SK-N-SH (cell line): ENCODE measurements at regions of chr1 and their contacts with region 1.

Region 1: DNA sequence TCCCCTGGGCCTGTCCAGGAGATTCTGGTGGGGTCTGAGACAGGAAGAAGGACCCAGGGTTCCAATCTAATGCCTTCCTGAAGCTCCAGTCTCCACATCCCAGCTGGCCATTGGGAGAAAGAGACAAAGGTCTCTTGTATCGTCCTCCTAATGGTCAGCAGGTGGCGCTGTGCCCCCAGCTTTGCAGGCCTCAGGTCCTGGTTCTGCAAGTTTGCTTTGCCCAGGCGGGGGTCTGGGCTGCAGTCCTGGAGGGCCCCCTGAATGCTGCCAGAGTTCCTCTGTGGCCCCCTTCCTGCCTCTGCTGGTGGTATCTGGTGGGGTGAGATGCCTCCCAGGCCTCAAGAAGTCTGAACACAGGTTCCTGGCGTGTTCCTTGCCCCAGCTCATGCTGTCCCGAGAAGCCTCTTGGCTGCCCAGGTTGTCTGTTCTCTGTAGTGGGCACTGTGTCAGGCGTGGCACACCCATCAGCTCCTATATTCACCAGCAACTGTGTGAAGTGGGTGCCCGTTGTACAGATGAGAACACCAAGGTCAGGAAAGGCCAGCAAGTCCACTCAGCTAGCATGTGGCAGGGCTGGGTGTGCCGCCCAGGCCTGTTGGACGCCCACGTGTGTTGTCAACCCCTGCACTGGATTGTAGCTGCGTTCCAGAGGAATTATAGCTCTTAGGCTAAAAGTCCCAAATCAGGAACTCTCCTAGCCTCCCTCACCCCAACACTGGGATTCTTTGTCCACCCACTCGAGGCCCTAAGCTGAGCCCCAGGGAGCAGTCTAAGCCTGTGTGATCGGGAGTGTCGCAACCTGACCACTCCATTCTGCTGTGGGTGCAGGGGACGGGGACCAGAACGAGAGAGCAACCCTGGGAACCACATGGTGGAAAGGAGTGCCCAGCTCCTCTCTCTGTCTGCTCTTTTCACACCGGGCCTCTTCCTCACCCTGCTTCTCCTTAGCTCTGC is 33.9 kb upstream of the CSF3R start:
- DNase-seq: peak; percentile 87
- H3K4me3 ChIP-seq: peak overlapping the region in 1 of 2 experiments; percentile 43; a peak in 1 of 4 replicates
- H3K27ac ChIP-seq: no peak overlapping the region
- H3K4me1 ChIP-seq: peaks cover 0 to 3% of the 10 kb centered on the region in 2 experiments; a peak in 1 of 4 replicates
- H3K27me3 ChIP-seq: no peaks in the 10 kb centered on the region
- CTCF ChIP-seq: peak; percentile 83
- EP300 ChIP-seq: no peak
- RAD21 ChIP-seq: peak; percentile 93

Region 2: DNA sequence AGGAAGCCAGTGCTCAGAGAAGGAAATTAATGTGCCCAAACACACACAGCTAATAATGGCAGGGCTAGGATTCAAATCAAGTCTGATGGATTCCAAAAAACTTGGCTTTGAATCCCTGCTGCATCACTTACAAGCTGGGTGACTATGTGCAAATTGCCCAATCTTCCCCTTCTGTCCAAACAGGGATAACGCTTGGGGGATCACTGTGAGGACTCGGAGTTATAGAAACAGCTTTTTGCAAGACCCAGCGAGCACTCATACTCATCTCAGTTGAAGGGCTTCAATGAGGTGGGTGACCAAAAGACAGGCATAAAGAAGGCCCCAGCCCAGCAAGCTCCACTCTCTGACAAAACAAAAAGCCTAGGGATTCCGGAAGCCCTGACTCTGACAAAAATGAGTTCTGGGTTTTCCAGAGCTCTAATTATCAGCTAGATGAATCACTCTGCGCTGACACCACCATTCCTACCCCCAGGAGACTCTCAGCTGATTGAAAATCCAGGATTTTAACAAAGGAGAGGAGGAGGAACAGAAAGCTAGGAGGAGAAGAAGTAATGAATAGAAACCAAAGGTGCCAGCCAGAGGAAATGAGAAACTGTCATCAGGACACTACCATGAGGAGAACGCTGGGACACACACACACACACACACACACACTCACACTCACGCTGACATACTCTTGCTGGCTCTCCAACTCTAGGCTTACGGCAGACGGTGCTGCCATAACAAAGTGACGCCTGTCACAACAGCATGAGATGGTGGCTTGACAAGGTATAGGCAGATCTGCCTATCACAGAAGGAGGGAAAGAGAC is 129.3 kb before region 1 on chr1:
- CTCF ChIA-PET with region 1: no interaction called
- POLR2A ChIA-PET with region 1: no interaction called
- DNase-seq: no peak
- H3K4me3 ChIP-seq: peak overlapping the region; percentile 12 to 52; a peak in 2 of 4 replicates
- H3K27ac ChIP-seq: peak overlapping the region; percentile 97 to 99
- H3K4me1 ChIP-seq: peaks cover 25% of the 10 kb centered on the region in 2 experiments
- H3K27me3 ChIP-seq: no peaks in the 10 kb centered on the region
- CTCF ChIP-seq: no peak
- EP300 ChIP-seq: no peak
- RAD21 ChIP-seq: no peak

Region 3: DNA sequence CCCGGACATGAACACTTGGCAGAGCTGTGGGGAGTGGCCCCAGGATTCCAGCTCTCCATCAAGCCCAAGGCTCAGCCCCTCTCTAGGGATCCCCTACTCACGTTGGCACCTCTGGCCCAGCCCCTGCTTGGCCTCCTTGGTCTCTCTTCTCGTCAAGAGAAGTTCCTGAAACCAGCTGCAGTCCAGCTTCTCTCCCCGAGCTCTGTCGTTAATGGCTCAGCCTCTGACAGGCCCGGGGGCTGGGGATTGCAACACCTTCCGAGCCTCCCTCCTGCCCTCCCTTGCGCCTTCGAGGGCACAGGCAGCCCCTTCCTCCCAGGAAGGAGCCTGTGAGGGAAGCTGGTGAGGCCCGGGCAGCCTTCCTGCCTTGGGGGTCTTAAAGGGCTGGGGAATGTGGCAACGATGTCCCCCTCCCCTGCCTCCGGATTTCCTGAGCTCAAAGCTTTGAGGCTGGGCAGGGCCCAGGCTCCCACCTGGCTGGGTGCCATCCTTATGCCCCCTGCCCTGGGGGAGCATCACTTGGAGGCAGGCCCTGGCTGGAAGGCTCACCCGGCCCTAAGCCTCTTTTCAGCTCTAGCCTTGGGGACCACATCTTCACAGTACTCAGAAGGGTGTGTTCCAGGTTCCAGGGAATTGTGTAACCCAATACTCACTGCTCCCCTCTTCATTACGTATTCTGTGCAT is 33.8 kb before region 1 on chr1 and contains the start of gene CSF3R:
- CTCF ChIA-PET with region 1: interaction called, 21 read pairs
- POLR2A ChIA-PET with region 1: no interaction called
- DNase-seq: no peak
- H3K4me3 ChIP-seq: no peak within 1 kb of the TSS
- H3K27ac ChIP-seq: peak within 1 kb of the TSS in 1 of 2 experiments; percentile 13; a peak in 1 of 4 replicates
- H3K4me1 ChIP-seq: peaks cover 0 to 18% of the 10 kb centered on the region in 2 experiments; a peak in 1 of 4 replicates
- H3K27me3 ChIP-seq: no peaks in the 10 kb centered on the region
- CTCF ChIP-seq: no peak
- EP300 ChIP-seq: no peak
- RAD21 ChIP-seq: no peak
- polyA plus RNA-seq, gene CSF3R: not detected in 2 replicates

Region 4: DNA sequence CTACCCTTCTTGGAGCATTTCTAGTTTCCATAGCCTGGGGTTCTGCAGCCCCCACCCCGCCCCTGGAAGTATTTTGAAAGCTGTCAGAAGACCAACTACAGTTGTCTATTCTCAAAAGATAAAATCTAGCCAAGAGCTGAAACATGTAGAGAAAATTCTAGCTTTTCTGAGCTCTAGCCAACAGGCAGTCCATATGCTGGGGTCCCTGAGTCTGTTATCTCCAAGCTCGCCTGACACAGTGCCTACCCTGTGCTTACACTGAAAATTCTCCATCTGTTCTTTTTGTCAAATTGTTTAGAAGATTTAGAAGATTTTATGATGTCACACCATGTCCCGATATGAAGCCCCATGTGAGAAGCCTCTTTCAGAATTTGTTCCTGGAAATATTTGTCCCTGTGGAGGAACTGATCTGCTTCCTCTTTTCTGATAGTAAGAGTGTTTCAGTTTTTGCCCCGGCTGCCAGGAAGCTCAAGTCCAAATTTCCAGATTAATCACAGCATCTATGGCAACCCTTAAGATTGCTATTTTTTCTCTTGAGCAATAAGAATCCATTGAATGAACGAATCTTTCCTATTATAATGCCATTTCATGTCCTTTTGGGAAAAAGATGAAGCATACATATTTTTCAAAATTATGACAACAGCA is 10.3 kb before region 1 on chr1:
- CTCF ChIA-PET with region 1: interaction called, 49 read pairs
- POLR2A ChIA-PET with region 1: no interaction called
- DNase-seq: no peak
- H3K4me3 ChIP-seq: no peak overlapping the region
- H3K27ac ChIP-seq: no peak overlapping the region
- H3K4me1 ChIP-seq: no peaks in the 10 kb centered on the region
- H3K27me3 ChIP-seq: peaks cover 5% of the 10 kb centered on the region; the same call in 1 of the 2 replicates
- CTCF ChIP-seq: no peak
- EP300 ChIP-seq: no peak
- RAD21 ChIP-seq: no peak

Region 5: DNA sequence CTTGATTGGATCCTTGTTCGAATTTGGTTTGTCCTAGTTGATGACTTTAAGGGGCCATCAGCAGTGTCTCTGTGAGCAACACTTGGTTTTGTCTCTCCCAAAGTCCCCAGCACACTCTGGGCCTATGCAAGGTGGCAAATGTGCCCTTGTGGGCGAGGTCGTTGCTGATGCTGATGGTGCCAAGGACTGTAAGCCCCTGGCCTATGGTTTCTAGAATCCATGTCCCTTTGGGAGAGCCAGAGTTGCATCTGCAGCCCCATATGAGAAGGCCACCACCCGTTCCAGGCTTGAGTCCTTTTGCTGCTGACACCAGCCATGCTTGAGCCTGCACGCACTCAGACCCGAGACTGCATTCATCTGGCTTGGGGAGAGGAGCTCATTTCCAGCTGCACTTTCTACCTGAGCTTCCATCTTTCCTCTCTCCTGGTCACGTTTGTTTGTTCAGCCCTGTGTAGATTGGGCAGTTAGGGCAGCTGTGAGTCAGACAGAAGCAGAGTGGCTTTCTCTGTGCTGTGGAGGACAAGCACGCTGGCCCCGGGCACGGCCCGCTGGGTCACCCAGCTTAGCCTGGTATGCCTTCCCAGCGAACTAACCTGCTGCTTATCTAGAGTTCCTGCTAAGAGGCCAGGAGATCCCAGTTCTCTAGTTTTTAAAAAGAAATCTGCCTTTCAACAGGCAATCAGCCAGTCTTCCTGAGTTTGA is 18.2 kb after region 1 on chr1:
- CTCF ChIA-PET with region 1: interaction called, 39 read pairs
- POLR2A ChIA-PET with region 1: no interaction called
- DNase-seq: no peak
- H3K4me3 ChIP-seq: no peak overlapping the region
- H3K27ac ChIP-seq: no peak overlapping the region
- H3K4me1 ChIP-seq: peaks cover 0 to 6% of the 10 kb centered on the region in 2 experiments; a peak in 1 of 4 replicates
- H3K27me3 ChIP-seq: no peaks in the 10 kb centered on the region
- CTCF ChIP-seq: no peak
- EP300 ChIP-seq: no peak
- RAD21 ChIP-seq: no peak

Region 6: DNA sequence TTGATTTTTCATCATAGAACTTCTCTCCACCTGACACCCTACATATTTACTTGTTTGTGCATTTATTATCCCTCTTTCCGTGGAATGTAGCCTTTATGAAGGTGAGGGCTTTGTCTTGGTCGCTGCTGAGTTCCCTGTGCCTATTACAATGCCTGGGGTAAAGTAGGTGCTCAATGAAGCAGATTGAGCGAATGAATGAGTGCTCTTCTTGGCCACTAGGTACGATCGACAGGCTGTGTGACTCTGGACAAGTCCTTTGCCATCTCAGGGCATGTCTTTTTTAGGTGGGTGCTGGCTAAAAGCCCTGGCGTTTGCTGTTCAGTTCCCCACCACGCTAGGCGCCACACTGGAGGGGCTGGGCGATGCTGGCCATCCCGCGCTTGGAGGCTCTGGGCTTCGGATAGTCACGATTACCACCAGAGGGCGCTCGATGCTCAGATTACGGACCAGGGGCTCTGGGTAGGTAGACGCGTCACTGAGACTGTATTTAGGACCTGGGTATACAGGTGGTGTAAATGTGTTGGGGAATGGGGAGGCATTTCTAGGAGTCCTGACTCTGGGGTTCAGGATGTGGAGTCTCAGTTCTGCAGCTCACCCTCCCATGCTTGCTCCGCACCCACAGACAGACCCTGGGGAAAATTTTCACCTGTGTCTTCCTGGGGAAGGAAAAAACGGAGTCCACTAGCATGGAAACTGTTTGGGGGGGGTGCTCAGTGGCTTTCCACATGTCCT is 37.1 kb after region 1 on chr1:
- CTCF ChIA-PET with region 1: interaction called, 52 read pairs
- POLR2A ChIA-PET with region 1: no interaction called
- DNase-seq: peak; percentile 83
- H3K4me3 ChIP-seq: peak overlapping the region in 1 of 2 experiments; percentile 20; a peak in 1 of 4 replicates
- H3K27ac ChIP-seq: no peak overlapping the region
- H3K4me1 ChIP-seq: no peaks in the 10 kb centered on the region
- H3K27me3 ChIP-seq: no peaks in the 10 kb centered on the region
- CTCF ChIP-seq: peak; percentile 73
- EP300 ChIP-seq: no peak
- RAD21 ChIP-seq: peak; percentile 86

Region 7: GRCh38 chr1:36585569-36586548 is 69.2 kb after region 1 on chr1:
- CTCF ChIA-PET with region 1: interaction called, 10 read pairs
- POLR2A ChIA-PET with region 1: no interaction called
- DNase-seq: no peak
- H3K4me3 ChIP-seq: no peak overlapping the region
- H3K27ac ChIP-seq: no peak overlapping the region
- H3K4me1 ChIP-seq: no peaks in the 10 kb centered on the region
- H3K27me3 ChIP-seq: no peaks in the 10 kb centered on the region
- CTCF ChIP-seq: no peak
- EP300 ChIP-seq: no peak
- RAD21 ChIP-seq: no peak

Region 8: DNA sequence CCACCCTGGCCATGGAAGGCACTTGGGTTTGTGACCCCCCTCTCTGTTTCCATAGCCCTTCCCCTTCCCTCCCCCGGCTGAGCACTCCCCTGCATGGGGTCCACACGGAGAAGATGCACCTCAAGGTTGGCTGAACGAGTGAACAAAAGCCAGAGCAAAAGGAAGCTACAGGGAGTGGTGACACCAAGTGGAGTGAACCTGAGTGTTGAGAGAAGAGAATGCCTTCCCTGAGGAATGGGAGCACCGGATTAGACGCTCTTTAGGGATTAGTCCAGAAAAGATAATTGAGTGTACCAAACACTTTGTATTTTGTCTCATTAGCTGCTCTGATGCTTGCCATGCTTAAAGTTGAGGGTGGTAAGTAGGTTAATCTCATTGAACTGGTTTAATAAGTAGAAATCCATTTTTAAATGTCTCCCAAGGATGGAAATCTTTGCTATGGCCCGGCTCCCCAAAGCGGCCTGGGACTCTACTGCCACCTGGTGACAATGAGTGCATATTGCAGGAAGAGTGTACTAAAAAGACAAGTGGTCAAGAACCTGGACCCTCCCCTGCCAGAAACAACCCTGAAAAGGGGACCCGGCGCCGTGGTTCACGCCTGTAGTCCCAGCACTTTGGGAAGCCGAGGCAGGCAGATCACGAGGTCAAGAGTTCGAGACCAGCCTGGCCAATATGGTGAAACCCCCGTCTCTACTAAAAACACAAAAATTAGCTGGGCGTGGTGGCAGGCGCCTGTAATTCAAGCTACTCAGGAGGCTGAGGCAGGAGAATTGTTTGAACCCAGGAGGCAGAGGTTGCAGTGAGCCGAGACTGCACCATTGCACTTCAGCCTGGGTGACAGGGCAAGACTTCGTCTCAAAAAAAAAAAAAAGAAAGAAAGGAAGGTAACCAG is 807.1 kb after region 1 on chr1:
- CTCF ChIA-PET with region 1: interaction called, 11 read pairs
- POLR2A ChIA-PET with region 1: no interaction called
- DNase-seq: peak; percentile 76
- H3K4me3 ChIP-seq: peak overlapping the region in 1 of 2 experiments; percentile 45; a peak in 1 of 4 replicates
- H3K27ac ChIP-seq: no peak overlapping the region
- H3K4me1 ChIP-seq: no peaks in the 10 kb centered on the region
- H3K27me3 ChIP-seq: no peaks in the 10 kb centered on the region
- CTCF ChIP-seq: peak; percentile 54
- EP300 ChIP-seq: no peak
- RAD21 ChIP-seq: peak; percentile 77